Posterior cingulate gyrus (tissue), 11 donors: ENCODE measurements at regions of chr5 and their contacts with region 1.

Region 1: GRCh38 chr5:154610321-154611154 is 132.5 kb upstream of the HAND1 start:
- DNase-seq: peak; percentile 53 to 96 (median 75)

Region 2: GRCh38 chr5:154467655-154468354 is 142.7 kb before region 1 on chr5:
- intact Hi-C with region 1: loop called (anchors 1 kb)
- DNase-seq: peak; percentile 57 to 97 (median 82)

Region 3: DNA sequence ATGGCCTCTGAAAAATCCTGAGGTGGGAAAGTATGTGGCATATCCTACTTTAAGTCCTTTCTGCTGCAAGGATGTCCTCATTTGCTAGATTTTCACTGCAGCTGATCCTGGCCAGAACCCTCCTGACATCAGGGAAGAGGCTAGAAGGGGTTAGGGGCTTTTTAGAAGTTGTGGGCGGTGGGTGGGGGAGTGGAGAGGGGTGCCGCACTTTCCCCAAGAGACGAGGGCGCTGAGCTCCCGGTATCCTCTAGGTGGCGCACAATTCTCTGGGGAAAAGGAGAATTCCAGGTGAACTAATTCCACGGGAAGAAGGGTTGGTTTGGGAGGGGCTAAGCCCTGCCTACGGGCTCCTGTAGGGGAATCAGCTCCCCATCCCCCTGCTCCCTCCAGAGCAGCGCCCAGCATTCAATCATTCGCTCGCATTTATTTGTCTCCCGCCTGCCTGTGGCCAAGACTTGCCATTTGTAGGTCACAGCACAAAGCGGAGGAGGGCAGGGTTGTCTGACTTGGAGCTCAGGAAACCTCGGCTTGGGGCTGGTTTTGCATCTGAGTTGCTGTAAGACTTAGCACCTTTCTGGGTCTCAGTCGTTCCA is 89.6 kb before region 1 on chr5:
- intact Hi-C with region 1: loop called (anchors 5 kb)
- DNase-seq: peak in 5 of 10 donors; percentile 16 to 71 (median 27)

Region 4: DNA sequence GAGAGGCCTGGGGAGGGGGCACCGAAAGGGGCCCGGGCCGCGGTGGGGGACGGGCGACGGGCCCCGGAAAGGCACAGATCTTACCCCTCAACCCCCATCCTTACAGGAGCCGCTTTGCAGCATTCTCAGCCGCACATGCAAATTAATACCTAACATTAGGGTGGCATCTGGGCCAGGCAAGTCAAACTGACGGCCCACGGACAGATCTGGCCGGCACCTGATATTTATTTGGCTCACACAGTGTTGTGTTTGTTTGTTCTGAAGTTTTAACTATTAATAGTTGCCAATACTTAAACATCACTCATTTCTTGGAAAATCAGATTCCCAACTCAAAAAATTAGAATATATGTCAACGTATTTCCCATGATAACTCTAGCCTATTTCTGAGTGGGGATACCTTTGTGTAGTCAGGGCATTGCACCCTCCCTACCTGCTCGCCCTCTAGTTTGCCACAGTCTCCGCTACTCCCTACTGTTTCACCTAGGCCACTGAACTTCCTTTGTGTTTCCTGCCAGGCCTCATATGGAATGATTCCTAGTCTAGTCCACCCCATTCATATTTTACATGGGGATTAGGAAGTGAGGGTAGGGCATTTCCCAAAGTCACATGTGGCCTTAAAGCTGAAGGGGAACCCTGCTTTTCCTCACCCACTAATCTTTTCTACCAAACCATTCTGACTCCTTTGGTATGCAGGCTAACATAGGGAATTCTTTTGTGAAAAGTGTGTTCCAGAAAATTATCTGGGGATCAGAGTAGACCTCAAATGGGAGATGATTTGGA is 72.8 kb after region 1 on chr5:
- intact Hi-C with region 1: no loop called
- DNase-seq: no peak